Activated CD4-positive, alpha-beta memory T cell treated with anti-CD3 and anti-CD28 coated beads for 36 hours (primary cell): ENCODE measurements at regions of chr11 and their contacts with region 1.

Region 1: GRCh38 chr11:92969634-92970347 is at the start of gene MTNR1B:
- DNase-seq: no peak
- H3K4me3 Mint-ChIP-seq: no peak within 1 kb of the TSS
- H3K27ac Mint-ChIP-seq: no peak within 1 kb of the TSS
- H3K4me1 Mint-ChIP-seq: peaks cover 5% of the 10 kb centered on the region
- H3K27me3 Mint-ChIP-seq: peaks cover 7% of the 10 kb centered on the region
- total RNA-seq, gene MTNR1B: not detected

Region 2: DNA sequence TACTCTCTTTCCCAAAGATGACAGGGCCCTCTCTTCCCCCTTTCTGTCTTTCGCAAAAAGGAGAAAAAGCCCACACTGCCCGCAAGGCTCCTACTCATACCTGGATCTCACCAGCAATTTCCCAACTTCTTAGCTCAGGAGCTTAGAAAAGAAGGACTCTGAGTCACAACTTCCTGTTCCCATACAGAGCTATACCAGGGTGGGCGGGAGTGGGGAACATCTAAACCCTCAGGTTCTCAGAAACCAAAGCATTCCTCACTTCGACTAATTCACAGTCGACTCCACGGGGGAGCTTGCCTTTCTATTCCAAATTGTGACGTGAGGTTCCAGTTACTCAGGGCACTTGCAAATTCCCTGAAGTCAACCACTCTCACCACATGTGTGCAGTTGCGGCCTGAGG is 61.6 kb after region 1 on chr11:
- CTCF ChIA-PET with region 1: no interaction called
- POLR2A ChIA-PET with region 1: no interaction called
- intact Hi-C with region 1: loop called (anchors 2 kb)
- DNase-seq: peak; percentile 31
- H3K4me3 Mint-ChIP-seq: no peak overlapping the region
- H3K27ac Mint-ChIP-seq: peak overlapping the region; percentile 6
- H3K4me1 Mint-ChIP-seq: peaks cover 5% of the 10 kb centered on the region
- H3K27me3 Mint-ChIP-seq: no peaks in the 10 kb centered on the region

Region 3: GRCh38 chr11:93054881-93055280 is 85.1 kb after region 1 on chr11:
- CTCF ChIA-PET with region 1: no interaction called
- POLR2A ChIA-PET with region 1: no interaction called
- intact Hi-C with region 1: loop called (anchors 2 kb)
- DNase-seq: peak; percentile 43
- H3K4me3 Mint-ChIP-seq: peak overlapping the region; percentile 7
- H3K27ac Mint-ChIP-seq: peak overlapping the region; percentile 75
- H3K4me1 Mint-ChIP-seq: peaks cover 8% of the 10 kb centered on the region
- H3K27me3 Mint-ChIP-seq: peaks cover 6% of the 10 kb centered on the region

Region 4: DNA sequence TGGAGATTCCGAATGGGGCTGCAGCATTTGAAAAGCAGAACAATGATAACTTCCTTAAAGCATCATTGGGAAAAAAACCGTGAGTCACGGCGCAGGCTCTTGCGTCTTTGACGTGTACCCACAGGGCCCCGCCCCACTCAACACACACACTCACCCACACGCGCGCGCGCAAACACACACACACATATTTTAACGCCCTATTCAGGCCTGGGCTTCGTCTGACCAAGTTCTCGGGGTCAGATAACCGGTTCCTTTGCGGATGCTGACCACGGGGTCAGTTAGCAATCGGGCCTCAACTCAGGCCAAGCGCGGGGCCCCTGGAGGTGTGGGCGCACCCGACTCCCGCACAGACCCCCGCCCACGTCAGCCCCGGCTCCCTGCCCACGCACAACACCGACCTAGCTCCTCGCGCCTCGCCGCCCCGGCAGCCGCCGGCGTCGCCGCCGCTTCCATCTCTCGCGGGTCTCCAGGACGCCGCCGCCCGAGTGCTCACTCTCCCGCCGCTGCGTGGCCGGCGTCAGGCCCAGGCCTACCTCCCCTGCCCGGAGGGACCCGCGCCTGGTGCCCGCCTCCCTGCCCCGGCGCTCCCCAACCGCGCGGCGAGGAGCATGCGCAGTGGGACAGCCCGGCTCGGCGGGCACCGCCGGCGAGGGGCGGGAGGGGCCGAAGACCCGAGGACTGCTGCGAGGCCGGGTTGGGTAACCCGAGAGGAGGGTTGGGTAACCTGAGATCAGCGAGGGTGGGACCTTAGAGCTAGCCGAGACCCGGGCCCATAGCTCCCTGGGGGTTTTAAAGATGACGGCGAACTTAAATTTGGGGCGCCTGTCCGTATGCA is 227.8 kb after region 1 on chr11 and contains the start of gene SLC36A4:
- CTCF ChIA-PET with region 1: no interaction called
- POLR2A ChIA-PET with region 1: no interaction called
- intact Hi-C with region 1: loop called (anchors 10 kb)
- DNase-seq: peak; percentile 92
- H3K4me3 Mint-ChIP-seq: peak within 1 kb of the TSS; percentile 98
- H3K27ac Mint-ChIP-seq: peak within 1 kb of the TSS; percentile 94
- H3K4me1 Mint-ChIP-seq: peaks cover 23% of the 10 kb centered on the region
- H3K27me3 Mint-ChIP-seq: peaks cover 2% of the 10 kb centered on the region
- total RNA-seq, gene SLC36A4: 13.9 to 14.0 TPM

Region 5: GRCh38 chr11:93652161-93652597 is 682.4 kb after region 1 on chr11:
- CTCF ChIA-PET with region 1: no interaction called
- POLR2A ChIA-PET with region 1: no interaction called
- intact Hi-C with region 1: no loop called
- DNase-seq: no peak
- H3K4me3 Mint-ChIP-seq: no peak overlapping the region
- H3K27ac Mint-ChIP-seq: no peak overlapping the region
- H3K4me1 Mint-ChIP-seq: peaks cover 12% of the 10 kb centered on the region
- H3K27me3 Mint-ChIP-seq: peaks cover 4% of the 10 kb centered on the region